ENCODE measurements at regions of chr12 and their contacts with region 1.

Region 1: DNA sequence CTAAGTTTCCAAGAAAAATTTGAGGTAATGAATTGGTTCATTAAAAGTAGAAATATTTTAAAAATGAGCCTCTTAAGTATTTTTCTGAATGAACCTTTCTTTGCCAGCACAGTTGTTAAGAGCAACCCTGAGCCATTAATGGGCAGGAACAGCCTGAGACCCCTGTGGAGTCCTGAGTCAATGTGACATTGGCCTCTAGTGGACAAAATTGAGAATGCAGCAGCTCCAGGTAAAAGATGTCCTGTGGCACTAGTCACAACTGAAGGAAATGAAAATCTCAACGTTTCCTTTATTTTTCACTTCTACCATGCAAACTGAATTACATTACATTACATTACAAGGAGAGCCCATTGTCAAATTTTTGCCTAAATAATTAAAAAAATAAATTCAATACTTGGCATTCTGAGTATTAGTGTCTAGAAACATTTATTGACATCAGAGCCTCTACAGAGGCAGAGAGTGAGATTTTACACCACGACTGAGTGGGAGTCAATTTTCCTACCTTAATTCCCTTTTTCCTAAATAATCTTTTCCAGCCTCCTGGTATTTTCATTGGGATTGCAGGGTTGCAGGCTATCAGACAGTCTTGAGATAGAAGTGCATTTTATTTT is 135.7 kb downstream of the PPM1H start:
- DNase-seq: no peak
- ATAC-seq: peak; percentile 80 to 93 (median 84)
- H3K4me3 ChIP-seq: no peak overlapping the region
- H3K27ac ChIP-seq: no peak overlapping the region
- H3K4me1 ChIP-seq: peaks cover 0 to under 1% (median 0%) of the 10 kb centered on the region in 4 donors
- H3K27me3 ChIP-seq: no peaks in the 10 kb centered on the region
- CTCF ChIP-seq: peak; percentile 83 to 98 (median 92)
- POLR2A ChIP-seq: no peak

Region 2: DNA sequence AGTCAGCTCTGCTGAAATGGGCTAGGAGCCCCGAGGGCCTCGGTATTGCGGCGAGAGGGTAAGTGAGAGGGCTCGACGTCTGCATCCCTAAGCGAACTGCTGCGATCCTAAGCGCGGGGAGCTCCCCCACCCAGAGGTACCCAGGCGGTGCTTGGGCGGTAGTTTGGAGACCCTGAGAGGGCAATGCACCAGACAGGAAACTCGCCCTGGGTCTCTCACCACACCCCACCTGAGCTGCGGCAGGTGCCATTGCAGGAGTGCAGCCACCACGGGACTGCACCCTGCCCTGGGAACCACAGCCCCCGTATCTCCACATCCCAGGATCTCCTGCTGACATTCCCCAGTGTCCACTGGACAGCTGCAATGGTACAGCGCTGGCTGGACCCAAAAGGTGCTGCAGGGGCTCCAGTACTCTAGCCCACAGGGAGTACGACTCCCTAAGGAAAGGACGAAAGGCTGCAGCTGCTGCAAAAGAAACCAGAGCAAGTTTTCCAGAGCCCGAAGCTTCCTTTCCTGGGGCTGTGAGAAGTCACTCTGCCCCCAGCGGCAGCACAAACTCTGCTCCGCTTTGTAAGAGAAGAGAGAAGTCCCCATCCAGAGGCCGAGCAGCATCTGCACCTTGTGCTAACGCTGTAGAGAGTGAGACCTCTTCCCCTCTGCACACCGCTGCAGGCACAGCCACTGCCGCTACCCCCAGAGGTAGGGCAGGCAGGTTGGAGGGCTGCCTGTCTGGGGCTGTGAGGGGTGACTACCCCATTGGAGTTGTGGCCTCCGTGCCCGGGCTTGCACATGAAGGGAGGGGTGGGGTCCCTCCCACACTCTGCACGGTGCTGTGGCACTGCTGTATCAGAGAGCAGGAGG is 363.7 kb before region 1 on chr12:
- intact Hi-C with region 1: loop called (anchors 10 kb)
- DNase-seq: peak; percentile 56 to 69 (median 56)
- ATAC-seq: peak; percentile 86 to 90 (median 88)
- H3K4me3 ChIP-seq: peak overlapping the region; percentile 39 to 48 (median 42)
- H3K27ac ChIP-seq: no peak overlapping the region
- H3K4me1 ChIP-seq: peaks cover 0 to 12% (median 5%) of the 10 kb centered on the region in 4 donors
- H3K27me3 ChIP-seq: no peaks in the 10 kb centered on the region
- CTCF ChIP-seq: peak; percentile 18 to 56 (median 56)
- POLR2A ChIP-seq: no peak

Region 3: GRCh38 chr12:62862259-62862881 is 63.1 kb after region 1 on chr12:
- intact Hi-C with region 1: no loop called
- DNase-seq: no peak
- ATAC-seq: no peak
- H3K4me3 ChIP-seq: no peak overlapping the region
- H3K27ac ChIP-seq: no peak overlapping the region
- H3K4me1 ChIP-seq: no peaks in the 10 kb centered on the region
- H3K27me3 ChIP-seq: no peaks in the 10 kb centered on the region
- CTCF ChIP-seq: no peak
- POLR2A ChIP-seq: no peak

Measured in right lobe of liver (tissue), 6 donors.